ENCODE measurements at regions of chr15 and their contacts with region 1.

Region 1: DNA sequence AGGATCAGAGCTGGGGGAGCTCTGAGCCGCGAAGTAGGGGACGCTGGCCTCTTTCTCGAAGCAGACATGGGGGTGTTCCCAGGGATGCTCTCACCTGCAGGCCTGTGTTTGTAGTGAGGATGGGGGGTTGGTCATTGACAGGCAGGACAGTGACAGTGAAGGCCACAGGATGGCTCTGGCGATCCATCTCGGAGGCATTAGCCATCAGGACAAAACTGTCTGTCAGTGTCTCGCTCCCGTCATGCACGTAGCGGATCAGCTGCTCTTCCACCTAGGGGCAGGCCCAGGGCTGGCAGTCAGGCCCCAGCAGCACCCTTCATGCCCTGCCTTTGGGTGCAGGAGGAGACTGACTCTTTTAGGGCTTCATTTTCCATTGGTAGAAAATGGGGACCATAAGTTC is 28.0 kb downstream of the CSPG4 start:
- DNase-seq: no peak
- ATAC-seq: no peak
- H3K4me3 ChIP-seq: no peak overlapping the region
- H3K4me3 Mint-ChIP-seq: no peak overlapping the region
- H3K27ac ChIP-seq: no peak overlapping the region
- H3K27ac Mint-ChIP-seq: no peak overlapping the region
- H3K4me1 ChIP-seq: peaks cover 11% of the 10 kb centered on the region
- H3K4me1 Mint-ChIP-seq: no peaks in the 10 kb centered on the region
- H3K27me3 ChIP-seq: no peaks in the 10 kb centered on the region
- H3K27me3 Mint-ChIP-seq: no peaks in the 10 kb centered on the region
- CTCF ChIP-seq: no peak

Region 2: DNA sequence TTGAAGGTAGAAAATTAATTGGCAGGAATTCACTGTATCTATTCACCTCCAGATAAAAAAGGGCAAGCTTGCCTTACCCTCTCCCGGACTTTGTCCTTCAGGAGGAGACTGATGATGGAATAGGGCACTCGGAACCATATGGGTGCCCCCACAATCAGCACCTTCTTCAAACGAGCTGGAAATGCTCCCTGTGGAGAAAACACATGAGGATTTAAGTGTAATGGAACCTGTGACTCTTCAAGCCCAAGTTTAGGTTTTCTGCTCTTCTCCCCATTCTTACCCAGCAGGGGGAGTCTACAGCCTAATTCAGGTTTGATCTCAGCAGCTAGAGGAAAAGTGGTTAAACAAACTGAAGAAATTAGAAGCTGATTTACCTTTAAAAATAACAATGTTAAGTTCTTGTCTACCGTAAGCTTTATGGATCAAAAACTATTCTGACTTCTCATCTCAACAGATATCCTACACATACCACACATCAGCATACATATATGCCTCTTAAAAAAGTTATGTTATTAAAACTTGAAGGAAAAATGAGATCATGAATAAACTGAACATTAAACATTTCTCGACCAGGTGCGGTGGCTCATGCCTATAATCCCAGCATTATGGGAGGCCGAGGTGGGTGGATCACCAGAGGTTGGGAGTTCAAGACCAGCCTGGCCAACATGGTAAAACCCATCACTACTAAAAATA is 175.7 kb before region 1 on chr15:
- intact Hi-C with region 1: loop called (anchors 1 kb)
- DNase-seq: peak in 1 of 2 donors; percentile 67
- ATAC-seq: no peak
- H3K4me3 ChIP-seq: no peak overlapping the region
- H3K4me3 Mint-ChIP-seq: no peak overlapping the region
- H3K27ac ChIP-seq: no peak overlapping the region
- H3K27ac Mint-ChIP-seq: no peak overlapping the region
- H3K4me1 ChIP-seq: no peaks in the 10 kb centered on the region
- H3K4me1 Mint-ChIP-seq: no peaks in the 10 kb centered on the region
- H3K27me3 ChIP-seq: no peaks in the 10 kb centered on the region
- H3K27me3 Mint-ChIP-seq: no peaks in the 10 kb centered on the region
- CTCF ChIP-seq: peak; percentile 11

Region 3: GRCh38 chr15:75597667-75598341 is 86.8 kb before region 1 on chr15:
- intact Hi-C with region 1: loop called (anchors 2 kb)
- DNase-seq: peak in 1 of 2 donors; percentile 62
- ATAC-seq: peak; percentile 52 to 70 (median 69)
- H3K4me3 ChIP-seq: no peak overlapping the region
- H3K4me3 Mint-ChIP-seq: no peak overlapping the region
- H3K27ac ChIP-seq: no peak overlapping the region
- H3K27ac Mint-ChIP-seq: peak overlapping the region; percentile 16 to 64
- H3K4me1 ChIP-seq: peaks cover 14% of the 10 kb centered on the region
- H3K4me1 Mint-ChIP-seq: peaks cover 13 to 21% of the 10 kb centered on the region in 2 donors
- H3K27me3 ChIP-seq: no peaks in the 10 kb centered on the region
- H3K27me3 Mint-ChIP-seq: no peaks in the 10 kb centered on the region
- CTCF ChIP-seq: peak; percentile 55

Region 4: DNA sequence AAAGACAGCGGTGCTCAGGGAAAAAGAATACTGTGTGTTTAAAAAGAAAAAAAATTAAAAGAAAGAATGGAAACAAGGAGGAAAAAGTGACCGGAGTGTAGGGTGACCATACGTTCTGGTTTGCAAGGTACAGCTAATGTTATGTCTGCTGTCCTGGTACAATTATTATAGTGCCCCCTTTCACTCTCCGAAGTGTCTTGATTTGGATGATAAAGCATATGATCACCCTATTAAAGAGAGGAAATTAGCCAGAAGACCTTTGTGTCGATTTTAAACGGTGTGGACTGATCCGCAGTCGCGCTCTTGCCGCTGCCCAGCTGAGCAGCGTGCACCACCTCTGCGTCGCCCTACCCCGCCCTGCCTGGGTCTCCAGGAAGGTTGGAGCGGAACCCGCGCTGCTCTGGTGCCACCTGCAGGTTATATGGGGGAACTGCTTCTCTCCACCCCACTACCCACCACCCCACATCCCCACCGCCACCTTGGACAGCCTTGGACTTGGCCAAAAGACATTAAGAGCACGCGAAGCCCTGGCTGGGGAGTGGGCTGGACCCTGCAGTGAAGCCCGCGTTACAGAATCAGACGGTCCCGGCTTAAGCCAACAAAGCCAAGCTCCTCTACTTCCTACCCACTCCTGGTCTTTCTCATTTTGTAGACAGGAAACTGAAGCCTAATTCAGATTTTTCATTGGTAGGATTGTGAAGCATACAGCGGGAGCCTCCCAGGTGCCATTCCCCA is 117.4 kb after region 1 on chr15:
- intact Hi-C with region 1: loop called (anchors 1 kb)
- DNase-seq: peak; percentile 73 to 88
- ATAC-seq: peak; percentile 99 to 100 (median 100)
- H3K4me3 ChIP-seq: no peak overlapping the region
- H3K4me3 Mint-ChIP-seq: no peak overlapping the region
- H3K27ac ChIP-seq: no peak overlapping the region
- H3K27ac Mint-ChIP-seq: no peak overlapping the region
- H3K4me1 ChIP-seq: peaks cover 7% of the 10 kb centered on the region
- H3K4me1 Mint-ChIP-seq: peaks cover 9 to 11% of the 10 kb centered on the region in 2 donors
- H3K27me3 ChIP-seq: peaks cover 12% of the 10 kb centered on the region
- H3K27me3 Mint-ChIP-seq: peaks cover 51 to 54% of the 10 kb centered on the region in 2 donors
- CTCF ChIP-seq: peak; percentile 81